CD8-positive, alpha-beta T cell (primary cell): ENCODE measurements at regions of chr6 and their contacts with region 1.

Region 1: DNA sequence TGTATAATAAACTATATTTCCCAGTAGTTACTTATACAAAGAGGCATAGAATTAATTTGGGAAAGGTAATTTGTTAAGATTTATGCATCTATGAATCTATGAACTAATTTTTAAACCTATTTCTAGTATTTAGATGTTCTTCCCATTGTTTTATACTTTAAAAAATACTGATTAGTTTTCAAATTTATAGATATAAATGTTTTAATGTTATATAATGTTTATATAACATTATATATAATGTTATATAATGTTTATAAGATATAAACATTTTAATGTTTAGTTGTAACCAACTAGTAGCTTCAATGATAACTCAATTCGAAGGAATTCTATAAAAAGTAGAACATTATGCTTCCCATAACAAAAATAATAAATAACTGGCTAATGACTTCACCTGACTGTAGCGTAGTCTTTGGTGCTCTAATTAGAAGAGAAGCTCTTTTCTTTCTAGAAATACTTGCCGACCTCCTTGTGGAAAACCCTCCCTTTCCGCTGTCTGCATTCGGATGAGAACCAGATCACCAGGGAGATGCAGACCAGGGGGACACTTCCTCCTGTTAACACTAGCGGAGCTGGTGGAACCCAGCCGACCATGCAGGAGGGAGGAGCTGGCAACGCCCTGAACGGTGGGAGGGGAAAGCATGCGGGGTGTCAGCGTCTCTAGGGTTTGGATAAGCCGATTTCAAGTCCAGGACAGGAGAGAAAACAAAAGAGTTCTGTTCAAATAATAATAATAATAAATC is 158.4 kb downstream of the OR2B2 start:
- DNase-seq: peak; percentile 24 to 79 (median 64)
- ATAC-seq: no peak
- H3K4me3 ChIP-seq: peak overlapping the region; percentile 69 to 84
- H3K4me3 Mint-ChIP-seq: peak overlapping the region; percentile 86
- H3K27ac ChIP-seq: peak overlapping the region in 1 of 2 experiments; percentile 25
- H3K27ac Mint-ChIP-seq: peak overlapping the region; percentile 86
- H3K4me1 ChIP-seq: peaks cover 12% of the 10 kb centered on the region
- H3K4me1 Mint-ChIP-seq: peaks cover 34% of the 10 kb centered on the region
- H3K27me3 ChIP-seq: peaks cover 0 to 2% of the 10 kb centered on the region in 2 experiments
- H3K27me3 Mint-ChIP-seq: no peaks in the 10 kb centered on the region
- CTCF ChIP-seq: no peak

Region 2: DNA sequence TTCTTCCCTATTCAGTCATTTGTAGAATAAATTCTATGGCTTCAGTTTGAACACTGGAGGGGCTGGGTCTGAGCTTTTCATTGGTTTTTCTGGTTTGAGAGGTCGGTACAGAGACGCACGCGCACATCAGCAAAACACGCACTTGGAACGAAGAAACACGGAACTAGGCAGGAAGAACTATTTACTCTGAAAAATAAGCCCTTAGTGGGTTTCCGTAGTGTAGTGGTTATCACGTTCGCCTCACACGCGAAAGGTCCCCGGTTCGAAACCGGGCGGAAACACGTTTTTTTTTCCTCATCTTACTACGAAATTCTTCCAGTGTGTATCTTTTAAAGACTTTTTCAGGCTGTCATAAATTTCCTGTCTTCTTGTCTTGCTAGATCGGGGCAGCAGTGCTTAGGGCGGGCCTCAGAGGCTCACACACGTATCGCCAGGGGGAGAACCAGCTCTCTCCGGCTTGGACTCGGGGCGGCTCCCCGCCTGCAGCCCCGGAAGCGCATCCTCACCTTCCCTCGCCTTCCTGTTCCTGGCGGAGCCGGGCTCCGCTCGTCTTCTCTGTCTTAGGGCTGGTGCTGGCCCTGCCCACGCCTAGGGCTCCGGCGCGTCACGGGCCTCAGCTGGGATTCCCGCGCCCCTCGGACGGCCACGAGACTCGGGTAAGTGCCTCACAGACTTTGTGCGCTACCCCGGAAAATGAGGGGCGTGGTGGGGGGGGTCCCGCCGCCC is 1215.8 kb before region 1 on chr6 and contains the start of gene HMGN4:
- CTCF ChIA-PET with region 1: no interaction called
- POLR2A ChIA-PET with region 1: no interaction called
- intact Hi-C with region 1: loop called in 1 of 2 experiments (anchors 10 kb)
- DNase-seq: peak; percentile 65 to 96 (median 79)
- ATAC-seq: peak; percentile 69
- H3K4me3 ChIP-seq: peak within 1 kb of the TSS; percentile 66 to 99
- H3K4me3 Mint-ChIP-seq: peak within 1 kb of the TSS; percentile 89
- H3K27ac ChIP-seq: peak within 1 kb of the TSS; percentile 88 to 93
- H3K27ac Mint-ChIP-seq: peak within 1 kb of the TSS; percentile 92
- H3K4me1 ChIP-seq: peaks cover 32% of the 10 kb centered on the region
- H3K4me1 Mint-ChIP-seq: peaks cover 58% of the 10 kb centered on the region
- H3K27me3 ChIP-seq: no peaks in the 10 kb centered on the region
- H3K27me3 Mint-ChIP-seq: no peaks in the 10 kb centered on the region
- CTCF ChIP-seq: no peak
- total RNA-seq, gene HMGN4: 24.8 to 33.7 TPM

Region 3: DNA sequence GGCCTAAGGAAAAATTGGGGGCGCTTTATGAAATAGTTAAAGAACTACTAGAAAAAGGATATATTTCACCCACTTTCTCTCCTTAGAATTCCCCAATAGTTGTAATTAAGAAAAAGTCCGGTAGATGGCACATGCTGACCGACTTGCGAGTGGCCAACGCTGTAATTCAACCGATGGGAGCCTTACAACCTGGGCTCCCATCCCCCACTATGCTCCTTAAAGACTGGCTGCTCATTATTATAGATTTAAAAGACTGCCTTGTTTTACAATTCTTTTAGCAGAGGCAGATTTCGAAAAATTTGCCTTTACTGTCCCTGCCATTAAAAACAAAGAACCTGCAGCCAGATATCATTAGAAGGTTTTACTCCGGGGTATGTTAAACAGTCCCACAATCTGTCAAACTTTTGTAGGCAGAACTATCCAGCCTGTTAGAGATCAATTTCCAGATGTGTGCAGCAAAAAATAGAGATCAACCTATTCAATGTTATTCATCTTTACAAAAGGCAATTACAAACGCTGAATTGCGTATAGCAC is 564.9 kb before region 1 on chr6:
- CTCF ChIA-PET with region 1: interaction called, 4 read pairs
- POLR2A ChIA-PET with region 1: no interaction called
- intact Hi-C with region 1: loop called in 1 of 2 experiments (anchors 1 kb)
- DNase-seq: peak in 8 of 9 experiments; percentile 24 to 86 (median 50)
- ATAC-seq: peak; percentile 77
- H3K4me3 ChIP-seq: peak overlapping the region; percentile 58 to 62
- H3K4me3 Mint-ChIP-seq: peak overlapping the region; percentile 87
- H3K27ac ChIP-seq: peak overlapping the region in 1 of 2 experiments; percentile 33
- H3K27ac Mint-ChIP-seq: no peak overlapping the region
- H3K4me1 ChIP-seq: peaks cover 4% of the 10 kb centered on the region
- H3K4me1 Mint-ChIP-seq: peaks cover 10% of the 10 kb centered on the region
- H3K27me3 ChIP-seq: no peaks in the 10 kb centered on the region
- H3K27me3 Mint-ChIP-seq: no peaks in the 10 kb centered on the region
- CTCF ChIP-seq: peak; percentile 66

Region 4: DNA sequence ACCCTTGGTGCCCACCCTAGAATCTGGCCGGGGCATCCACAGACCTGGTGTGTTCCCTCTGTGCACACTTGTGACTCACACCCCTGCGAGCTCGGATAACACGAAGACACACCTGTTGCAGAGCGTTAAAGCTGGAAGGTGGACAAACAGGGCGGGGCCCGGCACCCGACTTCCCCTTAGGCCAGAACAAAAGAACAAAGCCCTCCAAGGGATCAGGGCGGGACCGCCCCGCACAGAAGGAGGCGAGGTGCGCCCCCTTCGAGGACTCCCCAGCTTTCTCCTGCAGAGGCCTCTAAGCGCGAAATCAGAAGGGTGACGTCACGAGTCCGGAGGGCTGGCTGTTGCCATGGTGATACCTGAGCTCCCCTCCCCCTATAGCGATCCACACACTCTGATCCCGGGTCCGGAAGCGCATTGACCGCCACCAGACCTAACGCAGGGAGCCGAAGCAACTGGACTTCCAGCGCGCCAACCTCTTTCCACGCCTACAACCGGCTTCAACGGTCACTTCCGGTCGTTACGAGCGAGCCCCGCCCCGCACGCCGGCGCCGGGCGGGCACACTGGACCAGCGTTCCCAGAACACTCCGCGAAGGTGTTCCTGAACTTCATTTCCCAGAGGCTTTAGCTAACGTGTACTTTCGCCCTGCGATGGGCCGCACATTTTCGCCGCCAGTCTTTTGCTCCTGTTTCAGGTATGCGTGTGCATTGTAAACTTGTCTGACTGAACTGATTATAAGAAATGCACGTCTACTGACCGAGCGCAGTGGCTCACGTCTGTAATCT is 281.0 kb before region 1 on chr6 and contains the start of gene ZNF184:
- CTCF ChIA-PET with region 1: interaction called, 5 read pairs
- POLR2A ChIA-PET with region 1: interaction called, 6 read pairs
- intact Hi-C with region 1: loop called in 1 of 2 experiments (anchors 2 kb)
- DNase-seq: peak; percentile 71 to 94 (median 84)
- ATAC-seq: peak; percentile 63
- H3K4me3 ChIP-seq: peak within 1 kb of the TSS; percentile 80 to 90
- H3K4me3 Mint-ChIP-seq: peak within 1 kb of the TSS; percentile 96
- H3K27ac ChIP-seq: peak within 1 kb of the TSS; percentile 94 to 96
- H3K27ac Mint-ChIP-seq: peak within 1 kb of the TSS; percentile 96
- H3K4me1 ChIP-seq: peaks cover 26% of the 10 kb centered on the region
- H3K4me1 Mint-ChIP-seq: peaks cover 48% of the 10 kb centered on the region
- H3K27me3 ChIP-seq: no peaks in the 10 kb centered on the region
- H3K27me3 Mint-ChIP-seq: no peaks in the 10 kb centered on the region
- CTCF ChIP-seq: no peak
- total RNA-seq, gene ZNF184: 31.8 to 32.9 TPM

Region 5: GRCh38 chr6:27608916-27609883 is 144.6 kb before region 1 on chr6:
- CTCF ChIA-PET with region 1: interaction called, 3 read pairs
- POLR2A ChIA-PET with region 1: no interaction called
- intact Hi-C with region 1: loop called in 1 of 2 experiments (anchors 10 kb)
- DNase-seq: peak in 2 of 9 experiments; percentile 44 to 58
- ATAC-seq: no peak
- H3K4me3 ChIP-seq: no peak overlapping the region
- H3K4me3 Mint-ChIP-seq: no peak overlapping the region
- H3K27ac ChIP-seq: no peak overlapping the region
- H3K27ac Mint-ChIP-seq: no peak overlapping the region
- H3K4me1 ChIP-seq: no peaks in the 10 kb centered on the region
- H3K4me1 Mint-ChIP-seq: peaks cover 11% of the 10 kb centered on the region
- H3K27me3 ChIP-seq: peaks cover 12 to 18% of the 10 kb centered on the region in 2 experiments
- H3K27me3 Mint-ChIP-seq: peaks cover 47% of the 10 kb centered on the region
- CTCF ChIP-seq: peak; percentile 48

Region 6: GRCh38 chr6:27809939-27810767 is 56.3 kb after region 1 on chr6:
- CTCF ChIA-PET with region 1: interaction called, 3 read pairs
- POLR2A ChIA-PET with region 1: interaction called, 9 read pairs
- intact Hi-C with region 1: loop called in 1 of 2 experiments (anchors 2 kb)
- DNase-seq: peak; percentile 63 to 96 (median 74)
- ATAC-seq: peak; percentile 60
- H3K4me3 ChIP-seq: peak overlapping the region; percentile 52 to 65
- H3K4me3 Mint-ChIP-seq: peak overlapping the region; percentile 95
- H3K27ac ChIP-seq: peak overlapping the region; percentile 83 to 87
- H3K27ac Mint-ChIP-seq: peak overlapping the region; percentile 99
- H3K4me1 ChIP-seq: peaks cover 36% of the 10 kb centered on the region
- H3K4me1 Mint-ChIP-seq: peaks cover 57% of the 10 kb centered on the region
- H3K27me3 ChIP-seq: no peaks in the 10 kb centered on the region
- H3K27me3 Mint-ChIP-seq: no peaks in the 10 kb centered on the region
- CTCF ChIP-seq: no peak

Region 7: DNA sequence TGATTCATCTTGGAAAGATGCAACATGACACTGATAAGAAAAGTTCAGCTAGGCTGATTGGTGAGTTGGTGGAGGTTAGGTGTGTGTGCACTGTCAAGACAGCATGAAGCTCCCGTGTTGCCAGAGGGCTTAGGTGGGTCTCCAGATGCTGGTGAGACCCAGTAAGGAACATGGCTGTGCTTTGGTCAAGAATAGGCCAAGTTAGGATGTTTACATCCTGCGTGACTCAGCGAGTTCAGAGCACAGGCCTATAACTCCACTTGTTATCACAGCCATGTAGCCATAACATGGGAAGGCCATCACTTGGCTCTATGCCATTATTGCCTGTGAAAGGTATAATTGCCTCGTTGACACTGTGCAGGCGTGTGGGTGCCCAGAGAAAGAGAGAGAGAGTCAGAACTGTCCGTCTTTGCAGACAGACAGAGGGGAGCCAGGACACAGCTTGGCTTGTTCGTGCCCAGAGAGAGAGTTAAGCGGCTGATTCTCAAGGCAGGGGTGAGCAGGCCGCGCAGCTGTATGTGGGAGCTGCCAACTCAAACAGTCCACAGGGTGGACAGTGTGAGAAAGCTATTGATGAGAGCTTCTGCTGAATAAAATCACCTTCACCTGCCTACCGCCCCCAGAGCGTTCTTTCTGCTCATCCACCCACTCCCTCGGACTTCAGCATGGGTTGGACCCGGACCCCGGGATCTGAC is 246.7 kb after region 1 on chr6:
- CTCF ChIA-PET with region 1: no interaction called
- POLR2A ChIA-PET with region 1: no interaction called
- intact Hi-C with region 1: no loop called
- DNase-seq: no peak
- ATAC-seq: no peak
- H3K4me3 ChIP-seq: no peak overlapping the region
- H3K4me3 Mint-ChIP-seq: no peak overlapping the region
- H3K27ac ChIP-seq: no peak overlapping the region
- H3K27ac Mint-ChIP-seq: no peak overlapping the region
- H3K4me1 ChIP-seq: no peaks in the 10 kb centered on the region
- H3K4me1 Mint-ChIP-seq: no peaks in the 10 kb centered on the region
- H3K27me3 ChIP-seq: no peaks in the 10 kb centered on the region
- H3K27me3 Mint-ChIP-seq: peaks cover 33% of the 10 kb centered on the region
- CTCF ChIP-seq: no peak

Region 8: GRCh38 chr6:28136585-28137504 is 383.0 kb after region 1 on chr6:
- CTCF ChIA-PET with region 1: no interaction called
- POLR2A ChIA-PET with region 1: no interaction called
- intact Hi-C with region 1: no loop called
- DNase-seq: peak; percentile 52 to 91 (median 77)
- ATAC-seq: peak; percentile 35
- H3K4me3 ChIP-seq: peak overlapping the region; percentile 79 to 88
- H3K4me3 Mint-ChIP-seq: peak overlapping the region; percentile 94
- H3K27ac ChIP-seq: peak overlapping the region; percentile 87 to 92
- H3K27ac Mint-ChIP-seq: peak overlapping the region; percentile 99
- H3K4me1 ChIP-seq: peaks cover 28% of the 10 kb centered on the region
- H3K4me1 Mint-ChIP-seq: peaks cover 71% of the 10 kb centered on the region
- H3K27me3 ChIP-seq: no peaks in the 10 kb centered on the region
- H3K27me3 Mint-ChIP-seq: no peaks in the 10 kb centered on the region
- CTCF ChIP-seq: no peak

Region 9: GRCh38 chr6:28235912-28236452 is 482.1 kb after region 1 on chr6:
- CTCF ChIA-PET with region 1: no interaction called
- POLR2A ChIA-PET with region 1: no interaction called
- intact Hi-C with region 1: no loop called
- DNase-seq: no peak
- ATAC-seq: no peak
- H3K4me3 ChIP-seq: no peak overlapping the region
- H3K4me3 Mint-ChIP-seq: no peak overlapping the region
- H3K27ac ChIP-seq: no peak overlapping the region
- H3K27ac Mint-ChIP-seq: no peak overlapping the region
- H3K4me1 ChIP-seq: no peaks in the 10 kb centered on the region
- H3K4me1 Mint-ChIP-seq: no peaks in the 10 kb centered on the region
- H3K27me3 ChIP-seq: no peaks in the 10 kb centered on the region
- H3K27me3 Mint-ChIP-seq: peaks cover 5% of the 10 kb centered on the region
- CTCF ChIP-seq: no peak

Region 10: DNA sequence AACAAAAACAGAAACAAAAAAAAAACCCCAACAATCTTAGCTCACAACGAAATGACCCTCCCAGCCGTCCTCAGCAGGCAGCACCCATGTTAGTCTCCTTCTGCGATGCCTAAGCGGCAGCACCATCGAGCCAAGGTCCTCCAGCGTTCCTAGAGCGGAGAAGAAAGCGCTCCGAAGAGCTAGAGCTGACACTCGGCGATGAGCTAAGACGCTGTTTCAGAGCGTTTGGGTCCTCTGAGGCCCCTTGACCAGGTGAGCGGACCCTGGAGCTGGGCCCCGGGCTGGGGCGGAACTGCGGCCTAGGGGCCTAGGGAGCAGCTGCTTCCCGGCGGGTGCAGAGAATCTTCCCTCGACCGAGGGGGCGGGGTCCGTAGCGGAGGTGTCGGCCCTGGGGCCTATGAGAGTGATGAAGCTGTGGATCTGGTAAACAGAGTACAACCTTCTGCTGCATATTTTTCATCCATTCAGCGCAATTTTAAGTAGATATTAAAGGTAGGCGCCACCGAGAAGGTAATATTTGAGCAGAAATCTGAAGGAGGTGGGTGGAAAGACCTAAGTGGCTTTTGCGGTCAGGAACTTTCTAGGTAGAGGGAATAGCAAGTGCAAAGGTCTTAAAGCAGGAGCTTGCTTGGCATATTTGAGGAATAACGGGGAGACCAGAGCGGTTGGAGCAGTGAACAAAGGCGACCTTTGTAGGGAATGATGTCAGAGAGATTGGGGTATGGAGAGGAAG is 513.3 kb after region 1 on chr6 and contains the start of gene ZSCAN26:
- CTCF ChIA-PET with region 1: no interaction called
- POLR2A ChIA-PET with region 1: no interaction called
- intact Hi-C with region 1: no loop called
- DNase-seq: peak; percentile 76 to 93 (median 88)
- ATAC-seq: peak; percentile 95
- H3K4me3 ChIP-seq: peak within 1 kb of the TSS; percentile 92 to 97
- H3K4me3 Mint-ChIP-seq: no peak within 1 kb of the TSS
- H3K27ac ChIP-seq: peak within 1 kb of the TSS; percentile 77 to 87
- H3K27ac Mint-ChIP-seq: no peak within 1 kb of the TSS
- H3K4me1 ChIP-seq: peaks cover 21% of the 10 kb centered on the region
- H3K4me1 Mint-ChIP-seq: peaks cover 31% of the 10 kb centered on the region
- H3K27me3 ChIP-seq: no peaks in the 10 kb centered on the region
- H3K27me3 Mint-ChIP-seq: no peaks in the 10 kb centered on the region
- CTCF ChIP-seq: no peak
- total RNA-seq, gene ZSCAN26: 11.1 to 14.7 TPM

Region 11: DNA sequence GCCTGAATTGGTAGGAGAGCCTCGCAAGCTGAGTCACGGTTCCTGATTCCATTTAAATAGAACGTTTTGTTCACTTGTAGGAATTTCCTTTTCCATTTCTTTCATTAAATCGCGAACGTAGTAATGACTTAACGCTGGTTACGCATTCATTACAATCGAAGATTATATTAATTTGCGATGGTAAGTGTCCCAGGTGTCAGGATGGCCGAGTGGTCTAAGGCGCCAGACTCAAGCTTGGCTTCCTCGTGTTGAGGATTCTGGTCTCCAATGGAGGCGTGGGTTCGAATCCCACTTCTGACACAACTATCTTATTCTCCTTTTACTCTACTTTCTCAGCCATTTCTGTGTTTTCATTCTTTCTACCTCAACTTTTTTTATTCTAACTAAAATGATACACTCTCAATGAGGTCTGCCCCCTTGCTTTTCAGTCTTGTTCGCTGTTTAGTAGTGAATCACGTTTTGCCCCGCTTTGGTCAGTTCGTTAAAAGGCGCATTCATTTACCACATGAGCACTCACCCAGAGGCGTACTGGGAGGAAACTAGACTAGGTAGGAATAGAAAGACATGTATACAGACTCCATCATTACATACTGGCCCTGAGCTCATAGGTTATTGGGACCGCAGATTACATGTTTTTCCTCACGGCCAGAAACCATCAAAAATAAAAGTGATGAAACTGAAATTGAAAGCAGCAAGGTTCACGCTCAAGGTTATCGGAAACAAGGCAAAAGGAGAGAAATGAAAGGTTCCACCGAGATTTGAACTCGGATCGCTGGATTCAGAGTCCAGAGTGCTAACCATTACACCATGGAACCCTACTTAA is 1187.2 kb after region 1 on chr6:
- CTCF ChIA-PET with region 1: no interaction called
- POLR2A ChIA-PET with region 1: no interaction called
- intact Hi-C with region 1: loop called in 1 of 2 experiments (anchors 5 kb)
- DNase-seq: peak in 8 of 9 experiments; percentile 58 to 92 (median 70)
- ATAC-seq: peak; percentile 70
- H3K4me3 ChIP-seq: peak overlapping the region; percentile 66 to 81
- H3K4me3 Mint-ChIP-seq: peak overlapping the region; percentile 91
- H3K27ac ChIP-seq: peak overlapping the region; percentile 70 to 79
- H3K27ac Mint-ChIP-seq: peak overlapping the region; percentile 96
- H3K4me1 ChIP-seq: peaks cover 40% of the 10 kb centered on the region
- H3K4me1 Mint-ChIP-seq: peaks cover 46% of the 10 kb centered on the region
- H3K27me3 ChIP-seq: no peaks in the 10 kb centered on the region
- H3K27me3 Mint-ChIP-seq: no peaks in the 10 kb centered on the region
- CTCF ChIP-seq: no peak